GM12878 (cell line): ENCODE measurements at regions of chr1 and their contacts with region 1.

Region 1: GRCh38 chr1:154324669-154325582 is at the start of gene ATP8B2:
- DNase-seq: no peak
- ATAC-seq: peak; percentile 74
- H3K4me3 ChIP-seq: peak within 1 kb of the TSS; percentile 91
- H3K27ac ChIP-seq: peak within 1 kb of the TSS; percentile 42
- H3K4me1 ChIP-seq: peaks cover 23% of the 10 kb centered on the region
- H3K27me3 ChIP-seq: no peaks in the 10 kb centered on the region
- CTCF ChIP-seq: peak; percentile 92 to 94 (median 92)
- EP300 ChIP-seq: no peak
- POLR2A ChIP-seq: no peak; the same call in 1 of the 2 replicates
- RAD21 ChIP-seq: peak; percentile 54
- polyA plus RNA-seq, gene ATP8B2: 0.44 to 0.82 TPM

Region 2: DNA sequence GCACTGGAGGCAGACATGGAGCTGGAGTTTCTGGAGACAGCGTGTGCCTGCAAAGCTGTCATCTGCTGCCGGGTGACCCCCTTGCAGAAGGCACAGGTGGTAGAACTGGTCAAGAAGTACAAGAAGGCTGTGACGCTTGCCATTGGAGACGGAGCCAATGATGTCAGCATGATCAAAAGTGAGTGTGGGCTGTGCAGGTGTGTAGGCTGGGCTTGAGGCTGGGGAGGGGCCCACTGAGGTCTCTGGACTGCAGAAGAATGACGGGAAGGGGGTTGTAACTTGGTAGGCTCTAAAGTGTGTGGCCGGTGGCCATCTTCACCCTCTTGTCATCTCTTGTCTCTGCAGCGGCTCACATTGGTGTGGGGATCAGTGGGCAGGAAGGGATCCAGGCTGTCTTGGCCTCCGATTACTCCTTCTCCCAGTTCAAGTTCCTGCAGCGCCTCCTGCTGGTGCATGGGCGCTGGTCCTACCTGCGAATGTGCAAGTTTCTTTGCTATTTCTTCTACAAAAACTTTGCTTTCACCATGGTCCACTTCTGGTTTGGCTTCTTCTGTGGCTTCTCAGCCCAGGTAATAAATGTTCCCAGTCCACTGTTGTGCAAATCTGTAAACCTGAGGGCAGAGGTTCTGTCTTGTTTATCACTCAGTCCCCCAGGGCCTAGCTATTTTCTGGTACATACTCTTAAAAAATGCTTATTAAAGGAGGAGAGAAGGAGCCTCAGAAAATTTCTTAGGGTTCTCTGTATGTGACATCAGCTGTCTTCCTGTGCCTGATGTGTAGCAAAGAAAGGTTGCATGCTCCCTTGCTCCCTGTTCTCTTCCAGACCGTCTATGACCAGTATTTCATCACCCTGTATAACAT is 20.3 kb after region 1 on chr1:
- CTCF ChIA-PET with region 1: interaction called, 18 read pairs
- POLR2A ChIA-PET with region 1: no interaction called
- RAD21 ChIA-PET with region 1: interaction called, 3 read pairs
- SMC1A ChIA-PET with region 1: no interaction called
- in situ Hi-C with region 1: no loop called
- intact Hi-C with region 1: no loop called
- DNase-seq: no peak
- ATAC-seq: peak; percentile 77
- H3K4me3 ChIP-seq: no peak overlapping the region
- H3K27ac ChIP-seq: no peak overlapping the region
- H3K4me1 ChIP-seq: no peaks in the 10 kb centered on the region
- H3K27me3 ChIP-seq: no peaks in the 10 kb centered on the region
- CTCF ChIP-seq: peak; percentile 54 to 80 (median 70)
- EP300 ChIP-seq: no peak
- POLR2A ChIP-seq: no peak
- RAD21 ChIP-seq: peak; percentile 49